Activated naive CD4-positive, alpha-beta T cell treated with anti-CD3 and anti-CD28 coated beads for 36 hours (primary cell): ENCODE measurements at regions of chr21 and their contacts with region 1.

Region 1: DNA sequence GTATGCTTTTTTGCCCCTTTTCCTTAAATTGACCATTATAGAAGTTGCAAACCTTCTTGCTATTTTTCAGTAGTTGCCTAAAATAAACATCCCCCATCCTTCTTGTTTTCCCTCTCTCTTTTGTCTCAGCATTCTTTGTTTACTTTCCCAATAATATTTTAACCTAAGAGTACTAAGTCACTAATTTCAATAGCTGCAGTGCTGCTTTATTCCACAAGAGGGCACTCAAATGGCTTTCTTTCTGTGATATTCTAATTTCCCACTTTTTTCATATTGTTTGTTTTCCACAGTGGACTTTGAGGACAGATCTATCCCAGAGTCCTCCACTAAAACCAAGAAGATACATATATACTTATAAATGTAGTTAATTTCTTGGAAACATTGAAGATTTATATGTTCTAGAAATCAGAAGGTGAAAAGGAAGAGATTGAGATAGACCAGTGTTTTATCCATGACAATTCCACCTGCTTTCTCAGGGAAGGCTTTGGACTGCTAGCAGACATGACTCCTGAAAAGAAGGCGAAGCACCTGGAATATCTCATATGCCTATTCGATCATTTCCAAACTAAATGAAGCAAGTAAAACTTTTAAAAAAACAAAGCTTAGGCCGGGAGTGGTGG is 104.8 kb upstream of the GRIK1 start:
- DNase-seq: no peak
- H3K4me3 Mint-ChIP-seq: no peak overlapping the region
- H3K27ac Mint-ChIP-seq: no peak overlapping the region
- H3K4me1 Mint-ChIP-seq: no peaks in the 10 kb centered on the region
- H3K27me3 Mint-ChIP-seq: peaks cover 10% of the 10 kb centered on the region

Region 2: DNA sequence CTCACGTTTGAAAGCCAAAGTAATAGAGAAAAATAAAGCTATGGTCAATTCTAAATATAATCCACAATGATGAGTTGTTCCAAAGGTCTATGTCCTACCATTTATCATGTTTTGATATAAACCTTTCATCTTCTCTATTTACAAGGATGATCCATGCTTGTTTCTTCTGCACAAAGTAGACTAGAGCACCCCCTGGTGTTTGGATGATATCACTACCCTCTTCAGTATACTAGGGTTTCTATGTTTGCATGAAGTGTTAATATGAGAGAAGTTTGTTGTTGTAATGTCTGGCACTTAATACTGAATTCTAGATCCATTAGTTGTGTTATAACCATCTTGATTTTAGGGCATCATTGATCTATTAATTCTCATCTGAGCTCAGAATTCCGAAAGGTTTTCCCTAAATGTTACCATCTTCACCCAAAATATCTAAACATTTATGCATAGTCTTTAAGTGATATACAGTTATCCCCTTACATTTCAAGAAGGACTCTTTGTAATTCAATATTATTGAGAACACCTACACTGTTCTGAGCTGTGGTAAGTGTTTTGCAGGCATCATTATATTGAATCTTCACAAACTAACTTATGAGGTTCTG is 150.2 kb after region 1 on chr21:
- CTCF ChIA-PET with region 1: interaction called, 17 read pairs
- intact Hi-C with region 1: loop called (anchors 1 kb)
- DNase-seq: peak; percentile 9
- H3K4me3 Mint-ChIP-seq: no peak overlapping the region
- H3K27ac Mint-ChIP-seq: no peak overlapping the region
- H3K4me1 Mint-ChIP-seq: no peaks in the 10 kb centered on the region
- H3K27me3 Mint-ChIP-seq: peaks cover 5% of the 10 kb centered on the region

Region 3: DNA sequence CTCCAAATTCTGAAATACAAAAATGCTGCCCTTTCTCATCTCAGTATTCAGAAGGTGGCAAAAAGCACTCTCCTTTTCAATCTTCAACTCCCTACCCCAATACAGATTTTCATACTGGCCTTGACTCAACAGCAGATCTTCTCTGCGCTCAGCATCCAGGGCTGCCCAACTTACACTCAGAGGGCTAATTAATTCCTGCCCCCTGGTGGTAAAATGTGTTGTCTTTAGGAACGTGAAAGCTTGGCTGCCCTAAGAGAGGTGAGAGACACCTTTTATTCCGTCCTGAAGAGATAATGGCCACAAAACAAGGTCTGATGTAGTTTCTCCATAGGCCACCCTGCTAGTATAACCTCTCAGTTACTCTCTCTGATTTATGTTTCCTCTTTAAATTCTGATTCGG is 213.2 kb after region 1 on chr21:
- CTCF ChIA-PET with region 1: no interaction called
- intact Hi-C with region 1: loop called (anchors 1 kb)
- DNase-seq: no peak
- H3K4me3 Mint-ChIP-seq: no peak overlapping the region
- H3K27ac Mint-ChIP-seq: no peak overlapping the region
- H3K4me1 Mint-ChIP-seq: no peaks in the 10 kb centered on the region
- H3K27me3 Mint-ChIP-seq: no peaks in the 10 kb centered on the region

Region 4: DNA sequence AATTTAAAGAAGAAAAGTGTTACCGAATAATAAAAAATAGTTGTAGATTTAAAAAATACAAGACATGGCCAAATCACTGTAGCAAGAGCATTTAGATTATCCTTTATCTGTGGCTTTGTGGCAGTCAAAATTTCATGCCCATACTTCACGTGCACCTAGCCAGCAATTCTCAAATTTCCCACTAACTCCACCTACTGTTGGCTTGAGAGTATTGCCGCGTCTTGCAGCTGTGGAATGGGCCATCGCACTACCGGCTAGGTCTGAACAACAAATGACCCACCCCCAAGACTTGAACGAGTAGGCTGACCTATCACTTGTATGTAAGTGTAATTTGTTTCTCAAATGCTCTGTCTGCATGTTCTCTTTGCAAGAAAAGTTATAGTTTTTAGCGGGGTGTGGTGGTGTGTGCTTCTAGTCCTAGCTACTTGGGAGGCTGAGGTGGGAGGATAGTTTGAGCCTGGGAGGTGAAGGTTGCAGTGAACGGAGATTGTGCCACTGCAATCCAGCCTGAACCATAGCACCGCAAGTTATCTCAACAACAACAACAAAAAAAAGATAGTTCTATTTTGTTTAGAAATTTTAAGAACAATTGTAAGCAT is 389.6 kb after region 1 on chr21:
- CTCF ChIA-PET with region 1: no interaction called
- intact Hi-C with region 1: loop called (anchors 10 kb)
- DNase-seq: peak; percentile 31
- H3K4me3 Mint-ChIP-seq: no peak overlapping the region
- H3K27ac Mint-ChIP-seq: no peak overlapping the region
- H3K4me1 Mint-ChIP-seq: no peaks in the 10 kb centered on the region
- H3K27me3 Mint-ChIP-seq: peaks cover 10% of the 10 kb centered on the region

Region 5: DNA sequence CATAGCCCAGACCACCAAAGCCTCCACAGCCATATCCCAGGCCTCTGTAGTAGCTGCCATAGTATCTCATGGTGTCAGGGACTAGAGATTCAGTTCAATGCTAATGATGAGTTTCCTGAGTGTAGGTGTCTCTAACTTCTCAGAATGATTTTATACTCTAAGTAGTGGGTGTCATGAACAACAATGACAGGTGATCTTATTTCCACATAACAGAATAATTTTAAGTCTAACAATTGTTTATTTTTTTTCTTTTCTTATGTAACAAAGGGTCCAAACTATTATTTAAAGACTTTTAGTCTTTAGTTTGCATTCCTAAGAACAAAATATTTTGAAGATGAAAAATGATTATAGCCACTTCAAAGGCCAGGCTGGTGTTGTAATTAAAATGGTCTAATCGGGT is 497.2 kb after region 1 on chr21 and contains the start of gene KRTAP19-6:
- CTCF ChIA-PET with region 1: no interaction called
- intact Hi-C with region 1: no loop called
- DNase-seq: no peak
- H3K4me3 Mint-ChIP-seq: no peak within 1 kb of the TSS
- H3K27ac Mint-ChIP-seq: no peak within 1 kb of the TSS
- H3K4me1 Mint-ChIP-seq: no peaks in the 10 kb centered on the region
- H3K27me3 Mint-ChIP-seq: no peaks in the 10 kb centered on the region
- total RNA-seq, gene KRTAP19-6: not detected